ENCODE measurements at regions of chr14 and their contacts with region 1.

Region 1: DNA sequence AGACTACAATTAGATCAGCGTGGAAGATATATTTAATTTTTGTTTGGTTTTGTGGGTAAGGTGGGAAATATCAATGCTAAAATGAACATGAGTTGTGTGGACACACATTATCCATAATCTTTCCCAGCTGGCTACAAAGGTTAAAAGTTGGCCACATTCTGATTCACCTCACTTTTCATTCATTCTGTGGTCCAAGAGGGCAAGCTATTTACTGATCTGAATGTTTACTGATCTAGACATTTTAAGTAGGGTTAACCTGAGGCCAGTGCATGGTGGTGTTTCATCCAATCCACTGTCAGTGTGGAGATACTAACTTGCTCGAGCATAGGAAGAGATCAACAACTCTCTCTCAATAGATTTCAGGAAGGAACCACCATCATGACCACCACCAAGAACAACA is 71.6 kb downstream of the DCAF5 start:
- DNase-seq: no peak
- H3K4me3 ChIP-seq: no peak overlapping the region
- H3K27ac ChIP-seq: no peak overlapping the region
- H3K4me1 ChIP-seq: peaks cover 0 to 46% (median 16%) of the 10 kb centered on the region in 4 donors
- H3K27me3 ChIP-seq: no peaks in the 10 kb centered on the region
- CTCF ChIP-seq: no peak

Region 2: GRCh38 chr14:68955164-68955921 is 125.9 kb before region 1 on chr14:
- intact Hi-C with region 1: loop called (anchors 5 kb)
- DNase-seq: peak; percentile 76 to 88
- H3K4me3 ChIP-seq: peak overlapping the region; percentile 4 to 35
- H3K27ac ChIP-seq: peak overlapping the region; percentile 97 to 100
- H3K4me1 ChIP-seq: peaks cover 8 to 100% (median 92%) of the 10 kb centered on the region in 4 donors
- H3K27me3 ChIP-seq: no peaks in the 10 kb centered on the region
- CTCF ChIP-seq: no peak

Region 3: DNA sequence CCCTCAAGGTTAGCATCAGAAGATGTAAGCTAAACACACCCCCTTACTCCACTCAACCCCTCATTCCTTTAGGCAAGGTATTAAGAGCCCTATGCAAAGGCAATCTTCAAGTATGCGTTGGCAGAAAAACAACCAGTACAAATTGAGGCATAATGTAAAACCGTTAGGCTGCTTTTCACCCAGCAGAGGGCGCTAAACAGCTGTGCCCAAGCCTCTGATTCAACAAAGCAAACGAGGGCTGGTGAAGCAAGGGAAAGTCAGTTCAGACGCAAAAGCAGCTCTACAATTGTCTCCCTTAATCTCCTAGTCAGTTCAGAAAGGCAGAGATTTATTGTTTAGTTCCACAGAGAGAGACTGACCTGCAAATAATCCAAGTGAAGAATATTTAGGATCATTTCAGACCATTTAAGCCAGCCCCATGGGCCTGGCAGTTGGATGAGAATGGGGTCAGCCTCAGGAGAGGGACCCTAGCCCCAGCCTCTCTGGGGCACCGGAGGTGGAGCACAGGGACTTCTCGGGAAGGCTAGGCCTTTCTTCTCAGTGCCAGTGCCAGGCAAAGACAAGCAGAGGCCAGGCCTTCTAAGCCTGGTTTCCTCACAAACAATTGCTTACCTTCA is 48.1 kb after region 1 on chr14:
- intact Hi-C with region 1: no loop called
- DNase-seq: peak; percentile 55 to 75
- H3K4me3 ChIP-seq: no peak overlapping the region
- H3K27ac ChIP-seq: peak overlapping the region; percentile 4 to 42
- H3K4me1 ChIP-seq: peaks cover 0 to 61% (median 20%) of the 10 kb centered on the region in 4 donors
- H3K27me3 ChIP-seq: no peaks in the 10 kb centered on the region
- CTCF ChIP-seq: peak; percentile 83 to 88